Dendritic cell treated with granulocyte-macrophage colony-stimulating factor and Interleukin-4, amounts not matched to agents 40 ng/mL and 50 ng/mL, for 4 days (primary cell): ENCODE measurements at regions of chr11 and their contacts with region 1.

Region 1: GRCh38 chr11:26297189-26297975 is 34.5 kb upstream of the ANO3 start:
- H3K4me3 Mint-ChIP-seq: no peak overlapping the region
- H3K27ac Mint-ChIP-seq: no peak overlapping the region
- H3K4me1 Mint-ChIP-seq: no peaks in the 10 kb centered on the region
- H3K27me3 Mint-ChIP-seq: no peaks in the 10 kb centered on the region

Region 2: DNA sequence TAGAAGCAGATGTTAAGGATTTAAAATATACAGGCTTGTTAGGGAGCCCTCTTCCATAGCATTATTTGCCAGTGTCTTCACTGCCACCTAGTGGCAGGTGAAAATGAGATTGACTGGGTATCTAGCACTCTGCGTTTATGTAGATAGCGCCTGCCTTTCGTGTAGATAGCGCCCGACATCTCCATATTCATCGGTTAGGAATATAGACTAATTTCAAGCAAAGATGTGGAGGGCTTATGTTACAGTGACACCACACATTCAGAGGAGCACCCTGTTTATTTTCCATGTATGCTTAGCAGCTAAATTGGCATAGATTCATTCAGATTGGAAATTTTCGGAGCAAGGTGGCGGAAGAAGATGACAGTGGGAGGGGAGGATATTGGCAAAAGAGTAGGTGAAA is 352.5 kb after region 1 on chr11:
- intact Hi-C with region 1: loop called (anchors 2 kb)
- H3K4me3 Mint-ChIP-seq: no peak overlapping the region
- H3K27ac Mint-ChIP-seq: no peak overlapping the region
- H3K4me1 Mint-ChIP-seq: no peaks in the 10 kb centered on the region
- H3K27me3 Mint-ChIP-seq: no peaks in the 10 kb centered on the region

Region 3: GRCh38 chr11:27501102-27501501 is 1203.7 kb after region 1 on chr11:
- intact Hi-C with region 1: loop called (anchors 5 kb)
- H3K4me3 Mint-ChIP-seq: no peak overlapping the region
- H3K27ac Mint-ChIP-seq: no peak overlapping the region
- H3K4me1 Mint-ChIP-seq: peaks cover 10% of the 10 kb centered on the region
- H3K27me3 Mint-ChIP-seq: no peaks in the 10 kb centered on the region